Right cardiac atrium (tissue), 5 donors: ENCODE measurements at regions of chr6 and their contacts with region 1.

Region 1: GRCh38 chr6:34386316-34387137 is 5.9 kb downstream of the NUDT3 start:
- DNase-seq: no peak
- ATAC-seq: no peak
- H3K4me3 ChIP-seq: no peak overlapping the region
- H3K27ac ChIP-seq: no peak overlapping the region
- H3K4me1 ChIP-seq: peaks cover 14% of the 10 kb centered on the region
- H3K27me3 ChIP-seq: no peaks in the 10 kb centered on the region

Region 2: GRCh38 chr6:34324738-34325444 is 61.6 kb before region 1 on chr6:
- intact Hi-C with region 1: loop called in 3 of 4 experiments (anchors 10 kb)
- DNase-seq: peak; percentile 45 to 77 (median 66)
- ATAC-seq: peak; percentile 87 to 93
- H3K4me3 ChIP-seq: no peak overlapping the region
- H3K27ac ChIP-seq: no peak overlapping the region
- H3K4me1 ChIP-seq: peaks cover 1% of the 10 kb centered on the region
- H3K27me3 ChIP-seq: no peaks in the 10 kb centered on the region

Region 3: GRCh38 chr6:34332251-34333198 is 54.0 kb before region 1 on chr6:
- intact Hi-C with region 1: loop called in 3 of 4 experiments (anchors 10 kb)
- DNase-seq: no peak
- ATAC-seq: no peak
- H3K4me3 ChIP-seq: no peak overlapping the region
- H3K27ac ChIP-seq: peak overlapping the region; percentile 64
- H3K4me1 ChIP-seq: peaks cover 6% of the 10 kb centered on the region
- H3K27me3 ChIP-seq: no peaks in the 10 kb centered on the region